ENCODE measurements at regions of chr6 and their contacts with region 1.

Region 1: GRCh38 chr6:159862103-159862502 is 28.7 kb upstream of the MAS1 start:
- DNase-seq: no peak
- ATAC-seq: no peak
- H3K4me3 ChIP-seq: no peak overlapping the region
- H3K27ac ChIP-seq: no peak overlapping the region
- H3K4me1 ChIP-seq: no peaks in the 10 kb centered on the region
- H3K27me3 ChIP-seq: peaks cover 0 to 17% (median 0%) of the 10 kb centered on the region in 7 donors
- CTCF ChIP-seq: no peak

Region 2: DNA sequence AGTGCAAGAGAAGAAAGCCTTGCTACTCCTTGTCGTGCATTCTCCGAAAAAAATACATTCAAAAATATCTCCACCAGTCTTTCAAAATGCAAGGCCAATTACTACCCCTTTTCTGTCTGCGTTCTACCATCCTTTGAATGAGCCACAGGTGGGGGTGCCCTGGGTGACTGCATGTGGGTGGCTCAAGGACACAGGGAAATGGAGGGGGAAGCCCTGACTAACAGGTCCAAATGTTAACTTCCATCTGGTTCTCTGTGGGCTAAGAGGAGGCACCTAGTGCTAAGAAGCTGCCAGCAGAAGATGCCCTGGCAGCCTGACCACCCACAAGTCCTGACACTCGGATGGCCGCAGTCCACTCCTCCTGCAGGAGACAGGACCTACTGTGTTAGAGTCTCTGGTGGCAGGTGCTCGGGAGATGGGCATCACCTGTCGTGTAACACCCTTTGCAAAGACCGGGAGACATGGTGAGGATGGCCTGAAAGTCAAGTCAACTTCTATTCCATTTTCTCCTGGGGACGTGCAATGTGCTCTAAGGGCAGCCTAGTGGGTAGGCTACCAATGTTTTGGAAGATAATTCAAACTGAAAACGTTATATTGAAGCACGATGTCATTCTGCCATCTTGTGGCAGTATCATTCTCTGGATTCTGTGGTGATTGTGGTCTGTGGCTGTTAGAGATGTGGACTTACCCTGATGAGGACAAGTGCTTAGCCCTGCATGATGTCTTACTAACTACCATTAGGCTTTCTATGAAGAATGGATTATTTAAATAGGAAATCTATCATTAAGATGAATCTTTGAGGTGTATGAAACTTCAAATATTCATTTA is 79.4 kb after region 1 on chr6:
- intact Hi-C with region 1: loop called in 9 of 10 experiments (anchors 1 to 5 kb)
- DNase-seq: no peak
- ATAC-seq: peak in 6 of 8 donors; percentile 29 to 69 (median 42)
- H3K4me3 ChIP-seq: no peak overlapping the region
- H3K27ac ChIP-seq: no peak overlapping the region
- H3K4me1 ChIP-seq: peaks cover 0 to 32% (median 16%) of the 10 kb centered on the region in 9 donors
- H3K27me3 ChIP-seq: no peaks in the 10 kb centered on the region
- CTCF ChIP-seq: peak in 8 of 9 donors; percentile 36 to 69 (median 56)

Region 3: GRCh38 chr6:160071800-160072690 is 209.9 kb after region 1 on chr6:
- intact Hi-C with region 1: loop called in 1 of 10 experiments (anchors 10 kb)
- DNase-seq: no peak
- ATAC-seq: peak in 3 of 8 donors; percentile 21 to 26 (median 24)
- H3K4me3 ChIP-seq: no peak overlapping the region
- H3K27ac ChIP-seq: no peak overlapping the region
- H3K4me1 ChIP-seq: no peaks in the 10 kb centered on the region
- H3K27me3 ChIP-seq: no peaks in the 10 kb centered on the region
- CTCF ChIP-seq: peak in 5 of 9 donors; percentile 15 to 31 (median 24)

Region 4: GRCh38 chr6:160455541-160456213 is 593.6 kb after region 1 on chr6:
- intact Hi-C with region 1: loop called in 8 of 10 experiments (anchors 2 to 10 kb)
- DNase-seq: peak; percentile 51 to 58
- ATAC-seq: peak; percentile 72 to 89 (median 85)
- H3K4me3 ChIP-seq: peak overlapping the region in 6 of 10 donors; percentile 6 to 43 (median 25)
- H3K27ac ChIP-seq: peak overlapping the region in 5 of 10 donors; percentile 23 to 63 (median 39)
- H3K4me1 ChIP-seq: peaks cover 0 to 14% (median 5%) of the 10 kb centered on the region in 9 donors
- H3K27me3 ChIP-seq: no peaks in the 10 kb centered on the region
- CTCF ChIP-seq: peak; percentile 76 to 98 (median 95)